HepG2 (cell line): ENCODE measurements at regions of chr6 and their contacts with region 1.

Region 1: DNA sequence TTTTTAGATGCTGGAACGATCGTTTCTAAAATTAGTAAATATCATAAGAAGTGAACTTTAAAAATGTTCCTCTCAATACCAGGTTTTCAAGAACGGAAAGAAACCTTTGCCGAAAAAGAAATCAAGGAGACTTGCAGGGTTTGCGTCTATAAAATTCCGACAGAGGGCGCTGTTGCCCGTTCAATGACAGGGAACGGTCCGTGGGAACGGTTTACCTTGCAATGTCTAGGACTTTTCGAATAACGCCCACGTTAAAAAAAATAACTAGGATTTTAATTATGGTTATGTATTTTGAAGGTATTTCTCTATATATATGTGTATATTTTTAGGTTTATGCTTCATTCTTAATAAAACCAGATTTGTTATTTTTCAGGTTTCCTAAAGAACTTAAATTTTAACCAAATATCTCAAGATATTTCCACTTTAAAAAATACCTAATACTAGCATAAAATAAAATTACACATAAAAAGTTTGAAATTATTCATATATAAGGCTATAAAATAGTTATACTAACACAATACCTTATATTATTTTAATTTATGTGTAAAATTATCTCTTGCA is 2.5 kb upstream of the TFAP2B start:
- DNase-seq: peak; percentile 67
- ATAC-seq: peak; percentile 93
- H3K4me3 ChIP-seq: peak overlapping the region; percentile 43 to 90 (median 62); a peak in 5 of 6 replicates
- H3K27ac ChIP-seq: no peak overlapping the region
- H3K4me1 ChIP-seq: no peaks in the 10 kb centered on the region
- H3K27me3 ChIP-seq: peaks cover 5 to 34% of the 10 kb centered on the region in 2 experiments
- CTCF ChIP-seq: peak; percentile 87
- EP300 ChIP-seq: no peak
- POLR2A ChIP-seq: no peak
- RAD21 ChIP-seq: peak; percentile 76

Region 2: DNA sequence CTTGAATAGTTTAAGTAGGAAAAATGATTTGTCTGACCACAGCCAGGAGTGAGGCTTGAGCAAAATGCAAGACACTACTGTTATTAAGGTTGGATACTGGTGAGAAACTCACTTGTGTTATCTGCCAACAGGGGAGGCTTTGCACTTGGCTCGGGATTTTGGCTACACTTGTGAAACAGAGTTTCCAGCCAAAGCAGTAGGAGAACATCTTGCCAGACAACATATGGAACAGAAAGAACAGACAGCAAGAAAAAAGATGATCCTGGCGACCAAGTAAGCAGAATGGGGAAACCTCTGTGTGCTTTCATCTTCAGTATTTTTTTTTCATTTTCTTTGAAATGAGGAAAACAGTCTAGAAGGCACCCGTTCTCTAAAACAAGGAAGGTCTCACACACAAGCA is 71.2 kb before region 1 on chr6:
- CTCF ChIA-PET with region 1: no interaction called
- POLR2A ChIA-PET with region 1: no interaction called
- in situ Hi-C with region 1: no loop called
- intact Hi-C with region 1: no loop called
- DNase-seq: no peak
- ATAC-seq: no peak
- H3K4me3 ChIP-seq: no peak overlapping the region
- H3K27ac ChIP-seq: no peak overlapping the region
- H3K4me1 ChIP-seq: no peaks in the 10 kb centered on the region
- H3K27me3 ChIP-seq: no peaks in the 10 kb centered on the region
- CTCF ChIP-seq: no peak
- EP300 ChIP-seq: no peak
- POLR2A ChIP-seq: no peak
- RAD21 ChIP-seq: no peak

Region 3: GRCh38 chr6:50979126-50979525 is 162.9 kb after region 1 on chr6:
- CTCF ChIA-PET with region 1: no interaction called
- POLR2A ChIA-PET with region 1: no interaction called
- in situ Hi-C with region 1: no loop called
- intact Hi-C with region 1: no loop called
- DNase-seq: no peak
- ATAC-seq: no peak
- H3K4me3 ChIP-seq: no peak overlapping the region
- H3K27ac ChIP-seq: no peak overlapping the region
- H3K4me1 ChIP-seq: no peaks in the 10 kb centered on the region
- H3K27me3 ChIP-seq: no peaks in the 10 kb centered on the region
- CTCF ChIP-seq: no peak
- EP300 ChIP-seq: no peak
- POLR2A ChIP-seq: no peak
- RAD21 ChIP-seq: no peak

Region 4: GRCh38 chr6:51432481-51432880 is 616.3 kb after region 1 on chr6:
- CTCF ChIA-PET with region 1: no interaction called
- POLR2A ChIA-PET with region 1: no interaction called
- in situ Hi-C with region 1: no loop called
- intact Hi-C with region 1: loop called (anchors 1 kb)
- DNase-seq: no peak
- ATAC-seq: no peak
- H3K4me3 ChIP-seq: no peak overlapping the region
- H3K27ac ChIP-seq: no peak overlapping the region
- H3K4me1 ChIP-seq: no peaks in the 10 kb centered on the region
- H3K27me3 ChIP-seq: no peaks in the 10 kb centered on the region
- CTCF ChIP-seq: no peak
- EP300 ChIP-seq: no peak
- POLR2A ChIP-seq: no peak
- RAD21 ChIP-seq: no peak

Region 5: GRCh38 chr6:51753635-51754034 is 937.4 kb after region 1 on chr6:
- CTCF ChIA-PET with region 1: interaction called, 4 read pairs
- POLR2A ChIA-PET with region 1: no interaction called
- in situ Hi-C with region 1: no loop called
- intact Hi-C with region 1: loop called (anchors 1 kb)
- DNase-seq: peak; percentile 3
- ATAC-seq: peak; percentile 79
- H3K4me3 ChIP-seq: no peak overlapping the region
- H3K27ac ChIP-seq: no peak overlapping the region
- H3K4me1 ChIP-seq: no peaks in the 10 kb centered on the region
- H3K27me3 ChIP-seq: no peaks in the 10 kb centered on the region
- CTCF ChIP-seq: peak; percentile 83
- EP300 ChIP-seq: no peak
- POLR2A ChIP-seq: no peak
- RAD21 ChIP-seq: no peak

Region 6: DNA sequence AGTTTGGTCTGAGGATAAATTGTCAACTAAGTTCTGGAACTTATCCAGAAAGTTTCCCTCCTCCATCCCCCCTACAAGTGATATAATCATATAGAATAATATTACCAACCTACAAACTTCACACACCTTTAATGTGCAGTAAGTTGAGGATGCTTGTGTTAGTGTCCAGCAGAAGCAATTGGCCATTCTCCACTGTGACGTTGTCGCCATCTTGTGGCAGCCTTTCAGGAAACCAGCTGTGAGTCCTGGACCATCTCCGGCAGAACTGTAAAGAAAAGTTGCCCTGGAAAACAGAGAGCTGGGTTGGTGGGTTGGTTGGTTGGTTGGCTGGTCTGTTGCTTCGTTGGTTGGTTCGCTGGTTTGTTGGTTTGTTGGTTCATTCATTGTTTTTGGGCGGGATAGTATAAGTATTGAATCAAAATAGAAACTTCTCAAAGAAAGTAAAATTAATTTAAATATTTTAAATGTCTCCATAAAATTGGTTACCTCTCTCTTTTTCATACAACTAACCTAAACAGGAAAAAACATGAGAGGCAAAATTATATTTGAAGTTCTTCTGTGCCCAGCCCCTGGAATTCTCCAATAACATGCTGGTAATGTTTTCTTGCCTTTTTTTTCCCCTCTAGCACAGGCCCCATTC is 1143.7 kb after region 1 on chr6:
- CTCF ChIA-PET with region 1: interaction called, 34 read pairs
- POLR2A ChIA-PET with region 1: no interaction called
- in situ Hi-C with region 1: loop called (anchors 5 kb)
- intact Hi-C with region 1: loop called (anchors 1 kb)
- DNase-seq: peak; percentile 70
- ATAC-seq: peak; percentile 97
- H3K4me3 ChIP-seq: no peak overlapping the region
- H3K27ac ChIP-seq: no peak overlapping the region
- H3K4me1 ChIP-seq: no peaks in the 10 kb centered on the region
- H3K27me3 ChIP-seq: no peaks in the 10 kb centered on the region
- CTCF ChIP-seq: peak; percentile 95
- EP300 ChIP-seq: no peak
- POLR2A ChIP-seq: no peak
- RAD21 ChIP-seq: peak; percentile 74

Region 7: DNA sequence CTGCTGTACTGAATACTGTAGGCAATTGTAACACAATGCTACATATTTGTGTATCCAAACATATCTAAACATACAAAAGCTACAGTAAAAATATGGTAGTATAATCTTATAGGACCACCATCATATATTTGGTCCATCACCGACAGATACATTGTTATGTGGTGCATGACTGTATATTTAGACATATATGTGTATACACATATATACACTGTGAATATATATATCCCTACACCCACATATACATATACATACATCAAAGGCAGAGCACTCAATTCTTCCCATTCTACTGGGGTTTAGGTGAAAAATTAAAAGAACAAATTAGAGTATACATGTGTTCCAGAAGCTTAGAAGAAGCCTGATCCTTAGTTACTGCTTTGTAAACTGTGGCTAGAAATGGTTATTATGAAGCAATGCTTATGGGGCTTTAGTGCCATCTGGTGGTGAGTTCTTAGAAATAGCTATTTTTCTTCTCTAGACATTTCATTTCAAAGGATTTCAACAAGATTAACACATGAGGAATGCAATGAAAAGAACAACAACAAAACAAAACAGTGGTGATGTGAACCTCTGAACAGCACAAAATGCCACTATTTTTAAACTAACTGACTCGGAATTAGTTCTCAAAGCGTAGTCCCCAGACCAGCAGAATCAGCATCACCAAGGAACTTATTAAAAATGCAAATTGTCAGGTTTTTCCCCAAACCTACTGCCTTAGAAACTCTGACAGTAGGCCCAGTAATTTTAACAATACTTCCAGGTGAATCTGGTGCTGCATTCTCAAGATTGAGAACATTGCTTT is 1233.3 kb after region 1 on chr6:
- CTCF ChIA-PET with region 1: interaction called, 3 read pairs
- POLR2A ChIA-PET with region 1: no interaction called
- in situ Hi-C with region 1: no loop called
- intact Hi-C with region 1: loop called (anchors 1 kb)
- DNase-seq: peak; percentile 33
- ATAC-seq: peak; percentile 74
- H3K4me3 ChIP-seq: no peak overlapping the region
- H3K27ac ChIP-seq: no peak overlapping the region
- H3K4me1 ChIP-seq: no peaks in the 10 kb centered on the region
- H3K27me3 ChIP-seq: no peaks in the 10 kb centered on the region; a peak in 1 of 5 replicates
- CTCF ChIP-seq: peak; percentile 67
- EP300 ChIP-seq: no peak
- POLR2A ChIP-seq: no peak
- RAD21 ChIP-seq: no peak